ENCODE measurements at regions of chrX and their contacts with region 1.

Region 1: DNA sequence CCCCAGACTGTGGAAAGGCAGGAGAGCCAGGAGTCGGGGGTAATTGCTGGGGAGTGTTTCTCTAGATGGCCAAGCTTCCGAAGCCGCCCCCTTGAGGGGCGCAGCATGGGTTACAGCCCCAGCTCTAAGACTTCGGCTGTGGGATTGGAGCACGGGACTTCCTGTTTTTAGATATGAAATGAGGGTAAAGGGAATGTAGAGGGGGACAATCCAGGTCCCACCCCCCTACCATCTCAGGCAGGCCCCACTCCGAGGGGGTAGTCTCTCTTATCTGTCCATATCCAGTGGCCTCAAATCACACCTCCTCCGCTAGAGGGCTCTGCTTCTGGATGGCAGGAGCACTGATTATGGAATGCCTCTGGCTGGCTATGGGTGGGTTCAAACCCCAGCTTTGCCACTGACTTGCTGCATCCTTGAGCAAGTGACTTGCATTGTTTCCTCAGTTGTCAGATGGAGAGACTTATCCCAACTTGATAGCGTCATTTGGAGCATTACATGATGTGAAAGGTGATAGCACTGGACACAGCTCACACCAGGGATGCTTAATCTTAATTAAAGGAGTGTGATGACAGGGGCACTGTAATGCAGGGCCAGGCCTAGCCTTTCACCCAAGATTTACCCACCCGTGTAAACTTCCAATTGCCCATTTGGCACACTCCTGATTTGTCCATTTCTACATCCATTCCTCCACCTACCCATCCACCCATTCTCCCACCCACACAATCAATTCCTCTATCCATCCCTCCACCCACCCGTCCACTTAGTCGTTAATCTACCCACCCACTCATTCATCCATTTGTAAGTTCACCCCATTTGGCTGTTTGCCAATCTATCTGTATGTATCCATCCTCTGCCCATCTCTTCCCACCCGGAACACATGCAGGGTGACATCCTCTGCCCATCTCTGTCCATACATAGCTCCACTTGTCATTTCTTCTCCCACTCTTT is 850 bp upstream of the KCND1 start:
- DNase-seq: peak in 5 of 10 donors; percentile 17 to 84 (median 26)

Region 2: GRCh38 chrX:49106930-49107329 is 134.4 kb after region 1 on chrX:
- intact Hi-C with region 1: loop called (anchors 5 kb)
- DNase-seq: peak in 6 of 10 donors; percentile 9 to 91 (median 41)